Heart left ventricle (tissue), 16 donors: ENCODE measurements at regions of chr1 and their contacts with region 1.

Region 1: DNA sequence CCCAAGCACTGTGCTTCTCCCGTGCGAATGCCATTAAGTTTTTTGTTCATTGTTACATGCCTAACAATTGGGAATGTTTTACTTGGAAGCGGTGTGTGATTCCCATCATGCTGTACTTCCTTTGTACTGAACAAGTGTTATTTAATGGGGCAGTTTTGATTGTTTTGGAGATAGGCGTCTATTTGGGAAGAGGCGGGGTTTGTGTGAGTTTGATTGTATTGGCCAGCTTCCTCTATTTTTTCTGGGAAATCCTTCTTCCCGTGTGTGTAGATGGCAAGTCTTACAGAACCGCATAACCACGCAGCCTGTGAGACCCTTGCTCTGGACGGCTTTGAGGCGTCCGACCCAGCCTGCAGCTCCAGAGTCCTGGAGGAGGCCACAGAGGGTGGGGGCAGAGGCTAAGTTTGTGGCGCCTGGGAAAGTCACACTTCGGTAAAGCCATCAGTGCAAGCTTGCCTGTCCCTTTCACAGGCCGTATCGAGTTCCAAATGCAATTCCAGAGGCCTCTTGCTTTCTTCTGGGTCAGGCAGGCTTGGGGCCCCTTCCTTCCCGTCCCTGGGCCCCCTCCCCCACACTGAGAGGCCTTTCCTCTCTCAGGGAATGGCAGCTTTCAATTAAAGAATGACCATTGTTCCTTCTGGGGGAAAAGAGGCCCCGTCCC is 210.3 kb downstream of the TOMM20 start:
- DNase-seq: peak in 4 of 5 donors; percentile 55 to 72 (median 69)
- ATAC-seq: peak; percentile 30 to 68 (median 47)
- H3K4me3 ChIP-seq: no peak overlapping the region
- H3K27ac ChIP-seq: peak overlapping the region; percentile 81 to 93 (median 87)
- H3K4me1 ChIP-seq: peaks cover 21 to 82% (median 71%) of the 10 kb centered on the region in 12 donors
- H3K27me3 ChIP-seq: no peaks in the 10 kb centered on the region
- CTCF ChIP-seq: no peak
- POLR2A ChIP-seq: no peak

Region 2: GRCh38 chr1:234599617-234600417 is 318.5 kb before region 1 on chr1:
- intact Hi-C with region 1: loop called in 2 of 10 experiments (anchors 5 to 10 kb)
- DNase-seq: peak; percentile 91 to 96 (median 94)
- ATAC-seq: peak; percentile 77 to 95 (median 88)
- H3K4me3 ChIP-seq: peak overlapping the region in 11 of 12 donors; percentile 29 to 86 (median 51)
- H3K27ac ChIP-seq: peak overlapping the region; percentile 88 to 100 (median 99)
- H3K4me1 ChIP-seq: peaks cover 29 to 66% (median 50%) of the 10 kb centered on the region in 12 donors
- H3K27me3 ChIP-seq: no peaks in the 10 kb centered on the region
- CTCF ChIP-seq: peak in 1 of 12 donors; percentile 10
- POLR2A ChIP-seq: peak in 1 of 2 donors; percentile 74

Region 3: DNA sequence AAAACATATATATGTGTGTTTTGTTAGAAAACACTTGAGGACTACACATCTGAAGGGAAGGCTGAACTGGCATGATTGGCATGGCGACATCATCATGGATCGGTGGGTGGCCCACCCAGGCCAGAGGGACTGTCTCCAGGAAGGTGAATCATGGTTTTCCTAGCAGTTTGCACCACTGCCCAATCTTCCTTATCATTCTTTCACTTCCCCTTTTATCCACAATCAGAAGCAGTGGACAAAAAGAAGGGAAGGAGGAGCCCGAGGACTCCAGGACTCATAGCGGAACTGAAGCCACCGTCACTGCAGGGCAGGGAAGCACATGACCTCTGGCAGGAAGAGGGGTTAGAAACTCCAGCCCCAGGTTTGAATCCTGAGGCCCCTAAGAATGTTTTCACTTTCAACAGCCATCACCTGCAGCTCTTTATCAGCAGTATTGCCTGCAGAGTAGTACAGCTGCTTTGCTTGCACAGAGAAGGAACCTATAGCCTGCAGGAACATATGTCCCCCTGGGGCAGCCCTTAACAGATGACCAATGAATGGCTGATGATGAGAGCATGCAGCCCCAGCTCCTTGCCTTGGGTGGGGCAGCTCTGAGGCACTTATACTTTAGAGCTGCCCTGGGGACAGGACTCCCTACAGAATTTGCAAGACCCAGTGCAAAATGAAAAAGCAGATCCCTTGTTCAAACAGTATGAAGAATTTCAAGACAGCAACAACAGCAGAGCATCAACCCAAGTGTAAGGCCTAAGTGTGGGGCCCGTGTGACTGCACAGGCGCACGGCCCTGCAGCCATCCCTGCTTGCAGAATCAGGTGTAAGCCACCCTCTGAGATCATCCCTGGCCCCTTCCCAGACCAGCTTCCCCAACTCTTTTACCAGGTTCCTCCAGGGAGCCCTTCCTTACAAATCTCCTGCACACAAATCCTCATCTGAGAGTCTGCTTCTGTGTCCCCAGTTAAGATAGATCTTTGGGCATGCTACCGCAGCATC is 66.6 kb before region 1 on chr1:
- intact Hi-C with region 1: no loop called
- DNase-seq: peak in 1 of 5 donors; percentile 46
- ATAC-seq: peak; percentile 31 to 76 (median 44)
- H3K4me3 ChIP-seq: no peak overlapping the region
- H3K27ac ChIP-seq: peak overlapping the region in 1 of 12 donors; percentile 63
- H3K4me1 ChIP-seq: peaks cover 0 to 53% (median 0%) of the 10 kb centered on the region in 12 donors
- H3K27me3 ChIP-seq: no peaks in the 10 kb centered on the region
- CTCF ChIP-seq: no peak
- POLR2A ChIP-seq: no peak

Region 4: DNA sequence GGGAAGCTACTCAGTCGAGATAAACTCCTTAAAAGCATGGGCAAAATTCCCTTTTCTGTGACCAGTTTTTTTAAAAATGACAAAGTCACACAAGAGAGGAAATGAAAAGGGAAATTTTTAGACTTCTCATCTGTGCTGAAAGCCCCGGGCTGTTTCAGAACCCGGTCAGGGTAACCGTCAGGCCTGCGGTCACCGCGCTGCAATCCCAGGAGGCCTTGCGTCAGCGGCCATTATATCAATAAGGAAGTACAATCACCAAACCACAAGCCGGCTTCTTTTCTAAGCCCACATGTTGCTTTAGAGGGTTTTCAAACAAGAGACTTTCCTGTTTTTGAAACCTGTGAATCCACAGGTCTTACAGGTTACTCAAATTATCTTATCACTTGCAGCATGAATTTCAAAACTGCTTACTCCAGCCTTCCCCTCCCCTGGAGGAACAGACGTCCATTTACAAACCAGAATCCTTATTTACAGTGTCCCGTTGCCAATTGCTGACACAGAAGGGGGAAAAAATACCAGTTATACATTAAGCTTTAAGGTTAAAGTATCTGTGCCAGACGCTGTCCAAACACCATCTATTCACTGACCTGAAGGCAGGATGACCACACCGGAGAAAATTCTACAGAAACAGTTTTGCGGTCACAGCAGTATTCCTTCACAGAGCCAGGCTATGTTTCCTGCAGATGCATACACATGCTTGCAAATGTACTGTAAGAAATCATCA is 45.0 kb after region 1 on chr1:
- intact Hi-C with region 1: loop called in 1 of 10 experiments (anchors 5 kb)
- DNase-seq: peak; percentile 81 to 91 (median 86)
- ATAC-seq: peak; percentile 48 to 78 (median 68)
- H3K4me3 ChIP-seq: peak overlapping the region in 3 of 12 donors; percentile 5 to 32 (median 23)
- H3K27ac ChIP-seq: peak overlapping the region; percentile 24 to 99 (median 72)
- H3K4me1 ChIP-seq: peaks cover 9 to 74% (median 45%) of the 10 kb centered on the region in 12 donors
- H3K27me3 ChIP-seq: no peaks in the 10 kb centered on the region
- CTCF ChIP-seq: no peak
- POLR2A ChIP-seq: no peak

Region 5: DNA sequence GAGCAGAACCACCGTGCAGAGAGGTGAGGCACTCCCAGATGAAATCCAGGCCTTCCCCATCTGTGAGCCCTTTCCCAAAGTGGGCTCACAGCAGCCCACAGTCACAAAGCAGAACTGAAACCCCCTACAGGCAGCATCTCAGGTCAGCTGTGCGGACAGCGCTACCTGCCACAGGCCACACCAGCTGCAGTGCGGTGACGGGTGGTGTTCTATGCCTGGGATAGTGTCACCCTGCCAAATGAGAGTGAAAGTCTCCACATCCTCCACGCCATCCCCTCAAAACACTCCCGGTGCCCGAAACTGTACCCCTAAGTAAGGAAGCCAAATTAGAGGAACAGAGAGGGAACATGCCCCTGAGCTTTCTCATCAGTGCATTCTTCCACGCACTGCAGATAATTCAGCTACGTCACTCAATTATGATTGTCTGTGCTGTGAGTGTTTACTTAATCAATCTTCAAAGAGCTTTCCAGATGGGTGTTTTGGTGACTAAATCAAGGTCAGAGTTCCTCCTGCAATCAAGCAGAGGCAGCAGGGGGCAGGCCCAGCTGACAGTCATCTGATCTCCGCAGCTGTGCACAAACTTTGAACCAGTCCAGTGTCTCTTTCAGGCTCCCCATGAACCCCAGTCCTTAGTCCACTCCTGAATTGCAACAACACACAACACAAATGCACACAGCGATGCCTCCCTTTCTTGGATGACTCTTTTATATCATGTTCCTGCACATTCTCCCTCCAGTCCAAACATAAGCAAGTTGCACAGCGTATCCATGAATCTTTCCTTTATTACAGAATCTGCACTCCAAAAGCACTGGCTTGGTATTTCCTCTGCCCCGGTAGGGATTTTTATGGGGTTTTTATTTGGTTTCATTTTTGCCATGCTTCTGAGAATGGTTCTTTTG is 60.3 kb after region 1 on chr1:
- intact Hi-C with region 1: loop called in 2 of 10 experiments (anchors 5 to 10 kb)
- DNase-seq: peak in 4 of 5 donors; percentile 48 to 71 (median 60)
- ATAC-seq: peak; percentile 7 to 51 (median 22)
- H3K4me3 ChIP-seq: peak overlapping the region in 2 of 12 donors; percentile 15 to 55
- H3K27ac ChIP-seq: peak overlapping the region; percentile 71 to 98 (median 88)
- H3K4me1 ChIP-seq: peaks cover 15 to 91% (median 45%) of the 10 kb centered on the region in 12 donors
- H3K27me3 ChIP-seq: no peaks in the 10 kb centered on the region
- CTCF ChIP-seq: peak in 5 of 12 donors; percentile 6 to 39 (median 19)
- POLR2A ChIP-seq: no peak

Region 6: DNA sequence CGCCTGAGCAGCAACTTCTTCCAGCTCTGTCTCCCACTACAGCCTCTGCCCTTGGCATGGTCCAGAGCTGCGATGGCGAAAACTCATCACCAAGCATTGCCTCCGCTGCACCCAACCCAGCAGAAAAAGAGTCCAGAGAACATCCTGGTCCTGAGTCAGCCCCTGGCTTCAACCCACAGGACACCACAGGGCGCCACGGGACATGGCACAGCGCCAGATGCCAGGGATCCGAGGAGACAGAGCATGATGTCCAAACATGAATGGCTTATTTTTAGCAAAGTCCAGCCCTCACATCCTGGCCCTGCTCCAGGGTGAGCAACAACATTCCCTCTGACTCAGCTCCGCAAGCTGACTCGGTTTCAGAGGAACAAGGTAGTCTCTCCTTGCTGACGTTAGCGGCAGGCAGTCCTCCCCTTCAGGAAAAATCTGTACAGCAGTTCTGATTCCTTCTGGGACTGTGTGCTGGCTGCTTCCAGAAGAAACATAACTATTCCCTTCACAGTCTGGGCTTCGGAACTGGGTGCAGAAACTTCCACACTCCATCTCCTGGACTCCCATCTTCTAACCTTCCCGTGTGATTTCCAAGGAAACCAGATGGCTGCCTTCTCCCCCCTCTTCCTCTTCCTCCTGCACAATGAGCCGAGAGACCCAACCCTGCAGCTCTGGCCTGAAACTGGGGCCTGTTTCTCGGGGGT is 79.0 kb after region 1 on chr1:
- intact Hi-C with region 1: loop called in 2 of 10 experiments (anchors 5 to 10 kb)
- DNase-seq: peak; percentile 95 to 100 (median 98)
- ATAC-seq: peak; percentile 94 to 96 (median 96)
- H3K4me3 ChIP-seq: peak overlapping the region in 7 of 12 donors; percentile 6 to 28 (median 18)
- H3K27ac ChIP-seq: peak overlapping the region; percentile 88 to 98 (median 93)
- H3K4me1 ChIP-seq: peaks cover 8 to 32% (median 26%) of the 10 kb centered on the region in 12 donors
- H3K27me3 ChIP-seq: no peaks in the 10 kb centered on the region
- CTCF ChIP-seq: peak in 1 of 12 donors; percentile 18
- POLR2A ChIP-seq: peak in 1 of 2 donors; percentile 62